Activated CD8-positive, alpha-beta T cell treated with anti-CD3 and anti-CD28 coated beads for 36 hours (primary cell): ENCODE measurements at regions of chr1 and their contacts with region 1.

Region 1: DNA sequence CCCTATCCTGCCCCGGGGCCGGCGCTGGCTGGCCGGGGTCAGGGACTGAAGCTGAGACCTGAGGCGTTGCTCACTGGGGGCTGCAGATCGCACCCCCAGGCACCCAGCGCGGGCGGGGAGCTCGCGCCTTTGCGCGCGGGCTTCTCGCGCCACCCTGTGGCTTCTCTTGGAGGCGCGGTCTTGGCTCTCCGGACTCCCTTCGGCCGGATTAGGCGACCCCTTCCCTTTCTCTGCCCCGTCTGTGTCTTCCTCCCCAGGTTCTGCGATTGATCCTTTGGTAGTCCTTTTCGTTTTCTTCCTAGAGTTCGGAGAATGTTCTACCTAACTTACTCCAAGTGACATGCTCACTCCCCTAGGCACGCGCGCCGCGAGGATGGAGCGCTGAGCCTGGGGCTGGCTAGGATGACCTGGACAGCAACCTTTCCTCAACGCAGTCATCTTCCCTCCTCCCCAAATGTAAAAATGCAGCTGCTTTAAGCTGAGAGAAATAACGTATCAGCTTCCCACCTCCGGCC is 495 bp upstream of the NTRK1 start:
- DNase-seq: peak; percentile 64
- ATAC-seq: peak; percentile 57
- H3K4me3 Mint-ChIP-seq: peak overlapping the region; percentile 74
- H3K27ac Mint-ChIP-seq: no peak overlapping the region
- H3K4me1 Mint-ChIP-seq: peaks cover 42% of the 10 kb centered on the region
- H3K27me3 Mint-ChIP-seq: peaks cover 58% of the 10 kb centered on the region
- CTCF ChIP-seq: peak; percentile 97

Region 2: DNA sequence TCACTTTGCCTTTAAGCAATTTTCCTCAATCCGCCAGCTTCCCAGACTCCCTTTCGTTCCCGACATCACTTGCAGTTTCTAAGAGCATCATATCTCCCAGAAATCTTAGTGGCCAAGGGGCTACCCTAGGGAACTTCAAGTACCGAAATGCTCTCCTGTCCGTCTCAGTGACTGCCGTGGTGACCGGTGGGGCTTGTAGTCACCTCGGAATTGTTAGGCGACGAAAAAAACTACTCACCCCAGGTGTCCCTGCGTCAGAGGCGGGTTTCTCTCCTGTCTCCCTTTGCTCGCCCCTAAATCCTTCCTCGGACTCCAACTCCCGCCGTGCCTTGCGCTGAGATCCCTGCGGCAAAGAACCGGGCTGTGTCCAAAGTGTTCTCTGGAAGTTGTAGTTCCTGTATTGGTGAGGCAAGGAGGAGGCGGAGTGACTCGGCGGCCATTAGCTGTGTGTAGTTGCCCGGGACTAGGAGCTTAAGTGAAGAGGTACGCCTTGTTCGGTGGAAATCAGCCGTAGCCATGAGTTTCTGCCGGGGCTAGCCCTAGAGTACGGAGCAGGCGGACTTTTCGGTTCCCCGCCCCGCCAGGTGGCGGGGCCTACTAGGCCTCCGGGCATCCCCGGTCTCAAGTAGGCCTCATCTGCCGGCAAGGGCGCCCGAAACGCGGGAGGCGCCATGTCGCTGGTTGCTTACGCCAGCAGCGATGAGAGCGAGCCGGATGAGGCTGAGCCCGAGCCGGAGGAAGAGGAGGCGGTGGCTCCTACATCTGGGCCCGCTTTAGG is 92.9 kb before region 1 on chr1 and contains the start of gene PRCC:
- CTCF ChIA-PET with region 1: interaction called, 10 read pairs
- POLR2A ChIA-PET with region 1: interaction called, 5 read pairs
- intact Hi-C with region 1: no loop called
- DNase-seq: peak; percentile 99
- ATAC-seq: peak; percentile 94
- H3K4me3 Mint-ChIP-seq: no peak within 1 kb of the TSS
- H3K27ac Mint-ChIP-seq: no peak within 1 kb of the TSS
- H3K4me1 Mint-ChIP-seq: peaks cover 34% of the 10 kb centered on the region
- H3K27me3 Mint-ChIP-seq: no peaks in the 10 kb centered on the region
- CTCF ChIP-seq: no peak
- total RNA-seq, gene PRCC: 69.8 to 70.6 TPM

Region 3: GRCh38 chr1:156797212-156797871 is 62.8 kb before region 1 on chr1:
- CTCF ChIA-PET with region 1: interaction called, 214 read pairs
- POLR2A ChIA-PET with region 1: interaction called, 20 read pairs
- intact Hi-C with region 1: loop called (anchors 5 kb)
- DNase-seq: peak; percentile 77
- ATAC-seq: peak; percentile 84
- H3K4me3 Mint-ChIP-seq: no peak overlapping the region
- H3K27ac Mint-ChIP-seq: no peak overlapping the region
- H3K4me1 Mint-ChIP-seq: peaks cover 6% of the 10 kb centered on the region
- H3K27me3 Mint-ChIP-seq: no peaks in the 10 kb centered on the region
- CTCF ChIP-seq: peak; percentile 91

Region 4: DNA sequence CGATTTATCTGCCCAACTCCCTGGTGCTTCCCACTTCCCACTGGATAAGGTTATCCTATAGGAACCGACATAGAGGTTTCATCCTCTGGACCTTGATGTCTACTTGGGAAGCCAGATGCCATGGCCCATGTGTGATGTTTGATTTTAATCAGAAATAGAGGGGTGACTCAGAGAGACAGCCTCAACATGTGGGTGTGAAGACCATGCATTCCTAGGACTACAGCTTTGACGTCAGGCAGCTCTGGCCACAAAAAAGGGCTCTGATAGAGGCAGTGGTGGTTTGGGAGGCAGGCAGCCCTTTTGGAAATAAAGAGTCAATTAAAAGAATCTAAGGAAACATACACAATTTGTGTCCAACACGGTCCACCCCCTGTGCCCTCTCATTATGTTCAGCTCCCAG is 38.4 kb before region 1 on chr1:
- CTCF ChIA-PET with region 1: interaction called, 121 read pairs
- POLR2A ChIA-PET with region 1: interaction called, 5 read pairs
- intact Hi-C with region 1: loop called (anchors 5 kb)
- DNase-seq: peak; percentile 85
- ATAC-seq: peak; percentile 84
- H3K4me3 Mint-ChIP-seq: no peak overlapping the region
- H3K27ac Mint-ChIP-seq: peak overlapping the region; percentile 65
- H3K4me1 Mint-ChIP-seq: peaks cover 45% of the 10 kb centered on the region
- H3K27me3 Mint-ChIP-seq: no peaks in the 10 kb centered on the region
- CTCF ChIP-seq: no peak

Region 5: DNA sequence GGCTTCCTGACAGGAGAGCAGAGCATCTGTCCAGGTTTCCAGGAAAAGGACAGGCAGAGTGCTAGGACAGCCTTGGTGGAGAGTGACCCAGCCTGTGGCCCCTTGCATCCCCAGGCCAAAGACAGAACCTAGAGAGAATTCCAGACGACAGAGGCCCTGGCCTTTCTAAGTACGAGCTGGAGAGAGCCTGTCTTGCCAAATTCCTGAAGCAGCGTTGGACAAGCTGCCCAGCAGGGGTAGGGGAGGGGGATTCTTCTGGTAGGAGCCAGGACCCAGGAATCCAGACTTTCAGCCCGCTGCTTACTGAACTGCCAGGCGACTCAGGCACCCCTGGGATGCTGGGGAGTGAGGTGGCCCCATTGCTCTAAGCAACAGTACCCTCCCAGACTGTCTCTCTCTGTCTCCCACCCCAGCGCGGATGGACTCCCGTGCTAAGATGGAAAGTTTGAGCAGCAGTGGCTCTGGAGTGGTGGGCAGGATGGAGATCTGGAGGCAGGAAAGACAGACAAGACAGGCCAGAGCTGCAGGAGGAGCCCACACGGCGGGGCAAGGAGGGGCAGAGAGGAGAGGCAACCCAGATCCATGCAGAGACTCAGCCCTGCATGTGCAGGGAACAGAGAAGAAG is 24.5 kb after region 1 on chr1:
- CTCF ChIA-PET with region 1: interaction called, 75 read pairs
- POLR2A ChIA-PET with region 1: interaction called, 4 read pairs
- intact Hi-C with region 1: no loop called
- DNase-seq: no peak
- ATAC-seq: no peak
- H3K4me3 Mint-ChIP-seq: no peak overlapping the region
- H3K27ac Mint-ChIP-seq: no peak overlapping the region
- H3K4me1 Mint-ChIP-seq: no peaks in the 10 kb centered on the region
- H3K27me3 Mint-ChIP-seq: peaks cover 25% of the 10 kb centered on the region
- CTCF ChIP-seq: no peak